Sciatic nerve (tissue), 2 donors: ENCODE measurements at regions of chr4 and their contacts with region 1.

Region 1: DNA sequence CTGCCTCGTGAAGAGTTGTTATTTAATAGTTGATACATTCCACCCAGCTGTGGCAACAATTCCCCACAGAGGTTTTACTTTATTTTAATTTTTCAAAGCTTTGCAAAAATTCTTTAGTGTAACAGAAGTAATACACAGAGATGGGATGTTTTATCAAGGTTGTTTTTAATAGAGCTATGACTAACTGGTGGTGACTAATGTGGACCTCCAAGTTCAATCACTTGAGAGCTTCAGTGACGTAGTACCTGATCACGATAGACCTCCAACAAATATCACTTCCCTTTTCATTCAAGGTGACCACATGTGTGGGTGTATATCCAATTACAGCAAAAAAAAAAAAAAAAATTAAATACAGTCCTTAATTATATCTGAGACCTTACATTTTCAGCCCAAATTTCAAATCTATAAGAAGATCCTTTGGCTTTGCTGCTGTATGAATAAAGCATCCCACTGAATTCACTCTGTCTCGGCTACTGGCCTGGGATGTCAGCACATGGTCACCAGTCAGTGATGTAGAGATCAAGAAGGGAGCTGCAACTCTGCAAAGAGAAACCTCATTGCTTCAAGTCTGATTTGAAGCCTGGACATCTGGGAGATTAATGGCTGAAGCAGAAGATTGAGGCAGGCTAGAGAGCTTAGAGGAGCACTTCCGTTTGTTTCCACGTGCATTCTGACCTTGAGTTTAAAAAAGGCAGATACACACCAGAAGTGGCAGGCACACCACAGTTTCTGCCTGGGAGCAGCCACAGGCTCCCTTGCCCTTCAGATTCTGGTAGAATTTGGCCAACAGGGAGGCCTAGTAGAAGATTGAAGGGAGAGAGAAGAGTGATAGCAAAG is 345.9 kb upstream of the NOCT start:
- DNase-seq: no peak
- ATAC-seq: no peak

Region 2: GRCh38 chr4:137253949-137254348 is 1415.7 kb before region 1 on chr4:
- intact Hi-C with region 1: loop called (anchors 10 kb)
- DNase-seq: no peak
- ATAC-seq: no peak

Region 3: GRCh38 chr4:138716559-138717335 is 47.0 kb after region 1 on chr4:
- intact Hi-C with region 1: no loop called
- DNase-seq: no peak
- ATAC-seq: no peak